ENCODE measurements at regions of chr13 and their contacts with region 1.

Region 1: DNA sequence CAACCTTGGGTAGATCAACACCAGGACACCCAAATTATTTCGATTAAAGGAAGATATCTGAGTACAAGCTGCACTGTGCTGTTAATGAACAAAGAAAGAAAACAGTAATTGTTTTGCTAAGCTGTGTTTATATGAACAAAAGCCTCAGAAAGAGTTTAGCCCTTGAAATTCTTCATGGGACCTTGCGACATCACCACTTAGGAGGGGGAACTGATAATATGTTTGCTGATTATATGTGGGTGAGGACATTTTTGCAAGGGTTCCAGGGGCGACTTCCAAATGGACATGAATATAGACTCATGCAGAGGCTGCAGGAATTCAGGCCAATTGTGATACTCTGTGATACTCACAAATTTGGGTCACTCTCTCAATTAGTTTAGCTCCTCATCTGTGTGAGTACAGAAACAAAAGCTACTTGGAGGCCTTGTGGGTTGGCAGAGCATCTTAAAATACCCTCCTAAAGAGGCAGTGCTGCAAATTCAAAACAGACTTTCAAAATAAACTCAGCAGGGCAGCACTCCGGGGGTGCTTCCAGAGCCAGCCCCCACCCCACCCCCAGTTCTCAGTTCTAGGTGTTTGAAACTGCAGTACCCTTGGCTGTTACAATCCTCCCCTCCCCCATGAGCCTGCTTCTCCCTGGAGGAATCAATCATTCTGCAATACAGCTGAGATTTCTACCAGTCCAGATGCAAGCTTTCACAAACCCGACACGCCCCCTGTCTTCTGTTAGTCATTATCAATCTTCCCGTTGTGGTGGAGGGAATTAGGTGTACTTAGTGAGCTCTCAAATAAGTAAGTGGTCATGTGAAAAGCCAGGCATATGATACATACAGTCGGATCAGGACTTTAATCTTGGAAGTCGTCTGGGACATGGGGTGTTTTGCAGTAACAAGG is 97.0 kb upstream of the MBNL2 start:
- DNase-seq: peak; percentile 74
- H3K4me3 Mint-ChIP-seq: no peak overlapping the region
- H3K27ac Mint-ChIP-seq: peak overlapping the region; percentile 7
- H3K4me1 Mint-ChIP-seq: peaks cover 34% of the 10 kb centered on the region
- H3K27me3 Mint-ChIP-seq: peaks cover 41% of the 10 kb centered on the region

Region 2: DNA sequence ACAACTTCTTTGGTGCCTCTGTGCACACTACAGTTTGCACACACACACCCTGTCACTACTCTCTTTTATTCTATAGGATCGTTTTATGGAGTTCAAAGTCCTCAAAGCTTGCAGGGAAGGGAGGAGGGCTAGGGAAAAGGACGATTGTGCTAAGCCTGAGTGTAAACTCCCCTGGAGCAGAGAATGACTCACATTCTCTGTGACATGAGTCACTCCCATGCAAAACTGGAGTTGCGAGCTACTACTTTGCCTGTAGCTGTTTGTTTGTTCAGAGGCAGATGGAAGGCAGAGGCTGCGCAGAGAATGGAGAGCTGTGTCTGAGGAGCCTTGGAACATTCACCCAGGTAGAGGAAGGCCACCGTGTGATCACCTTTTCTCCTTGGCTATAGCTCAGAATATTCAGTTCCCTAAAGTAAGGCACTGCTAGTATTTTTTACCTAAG is 16.4 kb after region 1 on chr13:
- CTCF ChIA-PET with region 1: no interaction called
- POLR2A ChIA-PET with region 1: interaction called, 6 read pairs
- intact Hi-C with region 1: loop called (anchors 1 kb)
- DNase-seq: peak; percentile 54
- H3K4me3 Mint-ChIP-seq: no peak overlapping the region
- H3K27ac Mint-ChIP-seq: no peak overlapping the region
- H3K4me1 Mint-ChIP-seq: peaks cover 11% of the 10 kb centered on the region
- H3K27me3 Mint-ChIP-seq: peaks cover 23% of the 10 kb centered on the region

Region 3: GRCh38 chr13:97221989-97222700 is 97.0 kb after region 1 on chr13 and contains the start of gene MBNL2:
- CTCF ChIA-PET with region 1: interaction called, 13 read pairs
- POLR2A ChIA-PET with region 1: interaction called, 3 read pairs
- intact Hi-C with region 1: loop called (anchors 1 kb)
- DNase-seq: peak; percentile 93
- H3K4me3 Mint-ChIP-seq: peak within 1 kb of the TSS; percentile 81
- H3K27ac Mint-ChIP-seq: peak within 1 kb of the TSS; percentile 91
- H3K4me1 Mint-ChIP-seq: peaks cover 31% of the 10 kb centered on the region
- H3K27me3 Mint-ChIP-seq: no peaks in the 10 kb centered on the region
- total RNA-seq, gene MBNL2: 23.4 to 24.6 TPM

Region 4: DNA sequence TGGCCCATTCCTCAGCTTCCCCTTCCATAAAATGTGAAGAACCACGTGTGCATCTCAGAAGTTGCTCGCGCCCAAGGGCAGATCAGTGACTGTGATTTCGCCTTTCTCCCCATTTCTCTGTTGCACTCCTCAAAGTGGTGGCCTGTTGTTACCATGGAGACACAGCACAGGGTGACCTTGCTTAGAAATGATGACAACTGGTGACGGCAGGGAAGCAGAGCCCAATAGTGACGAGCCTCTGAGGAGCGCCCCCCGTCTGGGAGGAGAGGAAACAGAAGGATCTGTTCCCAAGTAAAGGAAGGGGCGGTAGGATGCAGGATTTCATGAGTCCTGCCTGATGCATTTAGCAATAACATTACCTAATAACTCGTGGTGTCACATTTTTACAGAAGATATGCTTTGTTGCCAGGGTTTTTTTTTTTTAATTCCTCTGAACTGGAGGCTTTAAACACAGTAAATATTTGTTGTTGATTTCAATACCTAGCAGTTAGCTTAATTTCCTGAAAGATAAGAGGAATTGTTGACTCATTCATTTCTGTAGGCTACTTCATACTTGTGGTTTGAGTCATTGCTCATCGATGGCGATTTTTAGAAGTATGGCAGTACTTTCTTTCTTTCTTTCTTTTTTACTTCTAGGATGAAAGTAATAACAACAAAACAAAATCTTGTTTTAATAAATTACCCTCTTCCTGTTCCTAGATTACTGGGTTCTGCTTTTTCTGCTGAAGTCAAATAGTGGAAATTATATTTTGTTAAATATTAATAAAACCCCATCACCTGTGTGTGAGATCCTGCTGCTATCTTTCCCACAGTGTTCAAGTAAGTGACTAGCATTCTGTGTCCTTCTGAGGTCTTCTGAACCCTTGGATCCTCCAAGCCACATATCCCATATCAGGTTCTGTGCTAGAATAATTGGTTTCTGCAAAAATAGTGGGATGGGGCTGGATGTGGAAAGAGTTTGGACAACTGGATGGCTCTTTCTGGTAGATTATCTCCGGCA is 132.9 kb after region 1 on chr13:
- CTCF ChIA-PET with region 1: no interaction called
- POLR2A ChIA-PET with region 1: interaction called, 3 read pairs
- intact Hi-C with region 1: loop called (anchors 1 kb)
- DNase-seq: peak; percentile 45
- H3K4me3 Mint-ChIP-seq: peak overlapping the region; percentile 40
- H3K27ac Mint-ChIP-seq: peak overlapping the region; percentile 76
- H3K4me1 Mint-ChIP-seq: peaks cover 80% of the 10 kb centered on the region
- H3K27me3 Mint-ChIP-seq: no peaks in the 10 kb centered on the region

Region 5: GRCh38 chr13:97295283-97296182 is 170.4 kb after region 1 on chr13:
- CTCF ChIA-PET with region 1: no interaction called
- POLR2A ChIA-PET with region 1: no interaction called
- intact Hi-C with region 1: loop called (anchors 1 kb)
- DNase-seq: no peak
- H3K4me3 Mint-ChIP-seq: no peak overlapping the region
- H3K27ac Mint-ChIP-seq: no peak overlapping the region
- H3K4me1 Mint-ChIP-seq: peaks cover 46% of the 10 kb centered on the region
- H3K27me3 Mint-ChIP-seq: no peaks in the 10 kb centered on the region

Region 6: GRCh38 chr13:97318532-97318931 is 193.4 kb after region 1 on chr13:
- CTCF ChIA-PET with region 1: no interaction called
- POLR2A ChIA-PET with region 1: no interaction called
- intact Hi-C with region 1: no loop called
- DNase-seq: no peak
- H3K4me3 Mint-ChIP-seq: no peak overlapping the region
- H3K27ac Mint-ChIP-seq: no peak overlapping the region
- H3K4me1 Mint-ChIP-seq: peaks cover 6% of the 10 kb centered on the region
- H3K27me3 Mint-ChIP-seq: no peaks in the 10 kb centered on the region

Region 7: GRCh38 chr13:97344265-97345175 is 219.4 kb after region 1 on chr13:
- CTCF ChIA-PET with region 1: interaction called, 3 read pairs
- POLR2A ChIA-PET with region 1: no interaction called
- intact Hi-C with region 1: loop called (anchors 5 kb)
- DNase-seq: peak; percentile 70
- H3K4me3 Mint-ChIP-seq: no peak overlapping the region
- H3K27ac Mint-ChIP-seq: no peak overlapping the region
- H3K4me1 Mint-ChIP-seq: peaks cover 12% of the 10 kb centered on the region
- H3K27me3 Mint-ChIP-seq: no peaks in the 10 kb centered on the region

Region 8: GRCh38 chr13:97539651-97540610 is 414.8 kb after region 1 on chr13:
- CTCF ChIA-PET with region 1: no interaction called
- POLR2A ChIA-PET with region 1: no interaction called
- intact Hi-C with region 1: loop called (anchors 5 kb)
- DNase-seq: no peak
- H3K4me3 Mint-ChIP-seq: no peak overlapping the region
- H3K27ac Mint-ChIP-seq: no peak overlapping the region
- H3K4me1 Mint-ChIP-seq: peaks cover 7% of the 10 kb centered on the region
- H3K27me3 Mint-ChIP-seq: peaks cover 8% of the 10 kb centered on the region

Measured in activated CD4-positive, alpha-beta memory T cell treated with anti-CD3 and anti-CD28 coated beads for 36 hours (primary cell).